Activated CD8-positive, alpha-beta T cell treated with anti-CD3 and anti-CD28 coated beads, Interleukin-2, amount 10 ng/mL, durations not matched to agents 7 days and 5 days (primary cell): ENCODE measurements at regions of chr6 and their contacts with region 1.

Region 1: GRCh38 chr6:31197559-31198305 is 27.2 kb upstream of the POU5F1 start:
- DNase-seq: peak; percentile 98
- ATAC-seq: peak; percentile 82
- H3K4me3 Mint-ChIP-seq: peak overlapping the region; percentile 97
- H3K27ac Mint-ChIP-seq: peak overlapping the region; percentile 100
- H3K4me1 Mint-ChIP-seq: peaks cover 52% of the 10 kb centered on the region
- H3K27me3 Mint-ChIP-seq: no peaks in the 10 kb centered on the region

Region 2: GRCh38 chr6:31139599-31139998 is 58.1 kb before region 1 on chr6:
- CTCF ChIA-PET with region 1: interaction called, 30 read pairs
- POLR2A ChIA-PET with region 1: no interaction called
- DNase-seq: no peak
- ATAC-seq: no peak
- H3K4me3 Mint-ChIP-seq: no peak overlapping the region
- H3K27ac Mint-ChIP-seq: no peak overlapping the region
- H3K4me1 Mint-ChIP-seq: peaks cover 6% of the 10 kb centered on the region
- H3K27me3 Mint-ChIP-seq: no peaks in the 10 kb centered on the region

Region 3: GRCh38 chr6:31158140-31158862 is 39.4 kb before region 1 on chr6 and contains the start of gene TCF19:
- CTCF ChIA-PET with region 1: interaction called, 10 read pairs
- POLR2A ChIA-PET with region 1: interaction called, 7 read pairs
- DNase-seq: peak; percentile 100
- ATAC-seq: peak; percentile 95
- H3K4me3 Mint-ChIP-seq: peak within 1 kb of the TSS; percentile 91
- H3K27ac Mint-ChIP-seq: peak within 1 kb of the TSS; percentile 81
- H3K4me1 Mint-ChIP-seq: peaks cover 40% of the 10 kb centered on the region
- H3K27me3 Mint-ChIP-seq: no peaks in the 10 kb centered on the region
- total RNA-seq, gene TCF19: 122 to 125 TPM

Region 4: GRCh38 chr6:31271641-31272357 is 74.1 kb after region 1 on chr6 and contains the start of gene HLA-C:
- CTCF ChIA-PET with region 1: interaction called, 10 read pairs
- POLR2A ChIA-PET with region 1: interaction called, 29 read pairs
- DNase-seq: peak; percentile 94
- ATAC-seq: peak; percentile 86
- H3K4me3 Mint-ChIP-seq: peak within 1 kb of the TSS; percentile 96
- H3K27ac Mint-ChIP-seq: peak within 1 kb of the TSS; percentile 100
- H3K4me1 Mint-ChIP-seq: peaks cover 46% of the 10 kb centered on the region
- H3K27me3 Mint-ChIP-seq: peaks cover 11% of the 10 kb centered on the region
- total RNA-seq, gene HLA-C: 1,075 to 1,135 TPM

Region 5: DNA sequence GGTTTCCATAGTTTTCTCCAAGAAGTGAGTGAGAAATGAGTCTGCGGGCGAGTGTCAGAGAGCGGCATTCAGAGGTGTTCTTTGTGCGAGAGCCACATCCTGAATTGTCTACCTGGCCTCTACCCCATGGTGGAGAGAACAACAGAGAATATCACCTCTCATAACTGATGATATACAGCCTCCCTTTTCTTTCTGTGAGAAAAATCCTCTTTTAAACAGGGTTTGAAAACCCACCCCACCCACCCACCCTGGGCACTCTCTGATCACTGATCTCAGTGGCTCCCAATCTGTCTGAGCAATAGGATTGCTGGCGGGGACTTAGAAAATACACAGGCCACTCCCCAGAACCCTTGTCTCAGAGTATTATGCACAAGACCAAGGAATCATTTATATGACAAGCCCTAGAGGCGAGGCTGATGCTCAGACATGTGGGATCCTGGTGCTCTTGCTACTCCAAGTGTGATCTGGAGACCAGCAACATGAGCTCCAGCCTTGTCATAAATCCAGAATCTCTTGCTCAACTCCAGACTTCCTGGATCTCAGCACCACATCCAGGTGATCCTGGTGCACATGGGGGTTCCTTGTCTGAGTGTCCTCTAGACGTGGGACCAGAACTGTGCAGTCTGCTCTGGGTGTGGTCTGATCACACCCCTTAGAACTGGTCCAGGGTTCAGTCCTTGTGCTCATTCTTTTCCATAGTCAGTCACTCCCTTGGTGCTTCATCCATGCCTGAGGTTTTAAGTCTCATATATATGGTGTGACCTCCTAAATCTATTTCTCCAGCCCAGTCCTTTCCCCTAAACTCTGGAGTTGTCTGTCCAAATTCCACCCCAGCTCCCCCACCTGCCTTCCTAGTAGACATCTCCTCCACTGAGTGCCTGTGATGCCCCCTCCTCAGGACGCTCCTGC is 153.9 kb after region 1 on chr6:
- CTCF ChIA-PET with region 1: interaction called, 3 read pairs
- POLR2A ChIA-PET with region 1: interaction called, 31 read pairs
- DNase-seq: no peak
- ATAC-seq: peak; percentile 25
- H3K4me3 Mint-ChIP-seq: no peak overlapping the region
- H3K27ac Mint-ChIP-seq: peak overlapping the region; percentile 73
- H3K4me1 Mint-ChIP-seq: peaks cover 43% of the 10 kb centered on the region
- H3K27me3 Mint-ChIP-seq: peaks cover 5% of the 10 kb centered on the region

Region 6: DNA sequence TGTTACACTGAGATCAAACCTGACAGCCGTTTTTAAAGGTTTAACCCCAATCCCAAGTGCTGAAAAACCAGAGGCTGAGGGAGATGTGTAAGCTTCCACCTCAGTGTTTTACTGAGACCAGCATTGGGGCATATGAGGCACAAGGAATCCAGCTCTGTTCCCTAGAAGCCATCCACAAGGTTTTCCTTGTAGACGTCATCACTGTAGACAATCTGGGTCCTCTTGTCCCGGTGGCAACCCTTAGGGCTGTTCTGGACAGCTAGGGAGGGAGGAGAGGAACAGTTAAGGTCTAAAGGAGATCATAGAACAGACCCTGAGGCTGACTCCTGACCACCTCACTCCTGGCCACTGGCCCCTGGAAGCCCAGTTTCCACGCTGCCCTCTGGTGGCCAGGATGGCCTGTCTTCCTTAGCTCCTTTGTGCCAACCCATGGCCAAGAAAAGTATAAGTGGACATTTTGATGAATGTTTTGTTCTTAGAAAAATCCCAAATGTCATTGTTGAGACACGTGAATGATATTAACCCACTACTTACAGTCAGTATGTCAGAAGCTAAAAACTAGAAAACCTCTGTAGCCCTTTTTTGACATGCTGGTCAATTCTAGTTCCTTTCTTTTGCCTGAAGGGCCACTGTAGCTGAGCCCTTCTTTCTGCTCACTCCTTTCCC is 754.5 kb after region 1 on chr6:
- CTCF ChIA-PET with region 1: no interaction called
- POLR2A ChIA-PET with region 1: no interaction called
- DNase-seq: peak; percentile 55
- ATAC-seq: peak; percentile 52
- H3K4me3 Mint-ChIP-seq: no peak overlapping the region
- H3K27ac Mint-ChIP-seq: no peak overlapping the region
- H3K4me1 Mint-ChIP-seq: peaks cover 3% of the 10 kb centered on the region
- H3K27me3 Mint-ChIP-seq: no peaks in the 10 kb centered on the region